ENCODE measurements at regions of chr3 and their contacts with region 1.

Region 1: DNA sequence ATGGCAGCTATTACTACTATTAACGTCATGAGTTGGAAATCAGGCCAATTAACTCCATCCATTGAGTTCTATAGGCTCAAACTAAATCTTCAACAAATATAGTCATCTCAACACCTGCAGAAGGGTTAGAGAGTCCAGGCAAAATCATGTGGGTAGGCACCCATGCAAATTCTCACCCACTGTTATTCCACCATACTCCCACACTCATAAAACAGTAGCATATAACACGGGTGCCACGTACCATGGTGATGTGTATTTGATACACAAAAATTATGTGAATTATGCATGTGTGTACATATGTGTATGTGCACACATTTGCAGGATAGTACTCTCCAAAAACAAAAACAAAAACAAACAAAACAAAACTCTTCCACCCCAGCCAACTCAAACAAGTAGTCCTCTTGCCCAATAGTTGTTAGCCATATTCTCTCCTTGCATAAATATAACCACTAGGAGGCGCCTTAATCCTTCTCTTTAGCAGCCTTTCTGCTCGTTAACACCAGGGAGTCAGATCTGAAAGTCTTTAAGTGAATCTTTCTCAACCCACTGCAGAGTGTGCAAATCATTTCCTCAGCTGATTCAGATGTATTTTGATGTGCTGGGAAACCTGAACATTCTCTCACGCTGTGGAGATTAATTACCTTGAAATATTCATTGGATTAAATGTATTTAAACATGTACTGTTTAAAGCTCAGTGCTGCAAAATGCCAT is 38.0 kb upstream of the COPB2 start:
- DNase-seq: peak; percentile 16
- ATAC-seq: peak; percentile 94
- H3K4me3 ChIP-seq: no peak overlapping the region
- H3K27ac ChIP-seq: no peak overlapping the region
- H3K4me1 ChIP-seq: no peaks in the 10 kb centered on the region
- H3K27me3 ChIP-seq: no peaks in the 10 kb centered on the region
- CTCF ChIP-seq: peak; percentile 67 to 79 (median 77)
- EP300 ChIP-seq: no peak
- POLR2A ChIP-seq: no peak
- RAD21 ChIP-seq: peak; percentile 90

Region 2: DNA sequence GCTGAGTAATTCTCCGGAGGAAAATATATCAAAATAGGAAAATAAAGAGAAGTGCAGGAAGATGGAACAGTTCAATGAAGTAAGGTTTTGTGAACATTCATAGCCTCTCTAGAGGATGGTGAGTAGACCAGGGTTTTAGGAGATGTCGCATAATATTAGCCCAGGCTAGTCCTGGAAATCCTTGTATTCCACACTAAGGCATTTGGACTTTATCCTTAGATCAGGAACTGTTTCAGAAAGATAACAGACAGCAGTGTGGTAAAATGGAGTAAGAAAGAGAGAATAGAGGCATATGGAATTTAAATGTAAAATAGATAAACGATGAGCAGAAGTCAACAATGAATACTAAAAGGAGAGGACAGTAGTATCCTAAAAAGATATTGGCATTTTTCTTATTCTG is 50.1 kb before region 1 on chr3:
- CTCF ChIA-PET with region 1: no interaction called
- POLR2A ChIA-PET with region 1: no interaction called
- RAD21 ChIA-PET with region 1: no interaction called
- SMC1A ChIA-PET with region 1: no interaction called
- in situ Hi-C with region 1: no loop called
- intact Hi-C with region 1: no loop called
- DNase-seq: no peak
- ATAC-seq: no peak
- H3K4me3 ChIP-seq: no peak overlapping the region
- H3K27ac ChIP-seq: no peak overlapping the region
- H3K4me1 ChIP-seq: no peaks in the 10 kb centered on the region; the same call in 1 of the 2 replicates
- H3K27me3 ChIP-seq: no peaks in the 10 kb centered on the region
- CTCF ChIP-seq: no peak
- EP300 ChIP-seq: no peak
- POLR2A ChIP-seq: no peak
- RAD21 ChIP-seq: no peak

Region 3: DNA sequence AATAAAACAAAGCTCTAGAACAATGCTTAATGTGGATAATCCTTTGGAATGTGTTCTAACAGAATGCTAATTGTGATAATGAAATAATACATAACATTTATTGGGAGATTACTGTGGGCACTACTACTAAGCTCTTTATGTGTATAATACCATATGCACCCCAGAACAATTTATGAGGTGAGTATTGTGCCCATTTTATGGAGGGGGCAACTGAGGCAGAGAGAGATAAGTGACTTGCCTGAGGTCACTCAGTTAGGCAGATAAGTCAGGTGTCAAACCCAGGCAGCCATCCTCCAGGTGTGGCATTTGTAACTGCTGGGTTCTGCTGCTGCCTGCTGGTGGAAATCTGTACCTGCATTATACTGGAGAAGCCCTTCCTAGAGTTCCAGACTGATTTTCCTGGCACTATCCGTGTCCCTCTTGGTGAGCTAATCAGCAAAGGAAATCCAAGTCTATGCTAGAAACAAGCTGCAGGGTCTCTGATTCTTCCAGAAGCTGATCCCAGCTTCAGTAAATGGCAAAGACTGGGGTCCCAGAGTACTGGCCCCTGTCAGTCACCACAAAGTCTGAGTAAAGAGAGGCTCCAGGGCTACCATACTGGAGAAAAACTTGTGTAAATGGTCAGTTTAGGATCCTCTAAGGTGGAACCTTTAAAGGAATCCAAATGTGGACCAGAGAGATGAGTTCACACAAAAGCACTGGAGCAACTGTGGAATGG is 134.7 kb after region 1 on chr3:
- CTCF ChIA-PET with region 1: interaction called, 14 read pairs
- POLR2A ChIA-PET with region 1: no interaction called
- RAD21 ChIA-PET with region 1: interaction called, 5 read pairs
- SMC1A ChIA-PET with region 1: interaction called, 5 read pairs
- in situ Hi-C with region 1: no loop called
- intact Hi-C with region 1: loop called (anchors 1 kb)
- DNase-seq: no peak
- ATAC-seq: peak; percentile 63
- H3K4me3 ChIP-seq: no peak overlapping the region
- H3K27ac ChIP-seq: no peak overlapping the region
- H3K4me1 ChIP-seq: no peaks in the 10 kb centered on the region
- H3K27me3 ChIP-seq: no peaks in the 10 kb centered on the region
- CTCF ChIP-seq: peak; percentile 47 to 51 (median 49); a peak in 4 of 6 replicates
- EP300 ChIP-seq: no peak
- POLR2A ChIP-seq: no peak
- RAD21 ChIP-seq: peak; percentile 77

Region 4: GRCh38 chr3:139629033-139629432 is 201.6 kb after region 1 on chr3:
- CTCF ChIA-PET with region 1: interaction called, 3 read pairs
- POLR2A ChIA-PET with region 1: no interaction called
- RAD21 ChIA-PET with region 1: no interaction called
- SMC1A ChIA-PET with region 1: interaction called, 6 read pairs
- in situ Hi-C with region 1: no loop called
- intact Hi-C with region 1: loop called (anchors 1 kb)
- DNase-seq: no peak
- ATAC-seq: peak; percentile 85
- H3K4me3 ChIP-seq: no peak overlapping the region
- H3K27ac ChIP-seq: no peak overlapping the region
- H3K4me1 ChIP-seq: peaks cover 5% of the 10 kb centered on the region
- H3K27me3 ChIP-seq: no peaks in the 10 kb centered on the region
- CTCF ChIP-seq: peak; percentile 23 to 46 (median 37); a peak in 5 of 6 replicates
- EP300 ChIP-seq: no peak
- POLR2A ChIP-seq: no peak
- RAD21 ChIP-seq: no peak

Region 5: GRCh38 chr3:139935016-139935865 is 507.8 kb after region 1 on chr3 and contains the start of gene CLSTN2:
- CTCF ChIA-PET with region 1: interaction called, 14 read pairs
- POLR2A ChIA-PET with region 1: no interaction called
- RAD21 ChIA-PET with region 1: no interaction called
- SMC1A ChIA-PET with region 1: no interaction called
- in situ Hi-C with region 1: no loop called
- intact Hi-C with region 1: no loop called
- DNase-seq: no peak
- ATAC-seq: peak; percentile 51
- H3K4me3 ChIP-seq: no peak within 1 kb of the TSS
- H3K27ac ChIP-seq: no peak within 1 kb of the TSS
- H3K4me1 ChIP-seq: no peaks in the 10 kb centered on the region
- H3K27me3 ChIP-seq: peaks cover 7% of the 10 kb centered on the region in 2 experiments; a peak in 3 of 4 replicates
- CTCF ChIP-seq: no peak
- EP300 ChIP-seq: no peak
- POLR2A ChIP-seq: no peak
- RAD21 ChIP-seq: no peak
- polyA plus RNA-seq, gene CLSTN2: under 0.01 to 0.10 TPM

Region 6: DNA sequence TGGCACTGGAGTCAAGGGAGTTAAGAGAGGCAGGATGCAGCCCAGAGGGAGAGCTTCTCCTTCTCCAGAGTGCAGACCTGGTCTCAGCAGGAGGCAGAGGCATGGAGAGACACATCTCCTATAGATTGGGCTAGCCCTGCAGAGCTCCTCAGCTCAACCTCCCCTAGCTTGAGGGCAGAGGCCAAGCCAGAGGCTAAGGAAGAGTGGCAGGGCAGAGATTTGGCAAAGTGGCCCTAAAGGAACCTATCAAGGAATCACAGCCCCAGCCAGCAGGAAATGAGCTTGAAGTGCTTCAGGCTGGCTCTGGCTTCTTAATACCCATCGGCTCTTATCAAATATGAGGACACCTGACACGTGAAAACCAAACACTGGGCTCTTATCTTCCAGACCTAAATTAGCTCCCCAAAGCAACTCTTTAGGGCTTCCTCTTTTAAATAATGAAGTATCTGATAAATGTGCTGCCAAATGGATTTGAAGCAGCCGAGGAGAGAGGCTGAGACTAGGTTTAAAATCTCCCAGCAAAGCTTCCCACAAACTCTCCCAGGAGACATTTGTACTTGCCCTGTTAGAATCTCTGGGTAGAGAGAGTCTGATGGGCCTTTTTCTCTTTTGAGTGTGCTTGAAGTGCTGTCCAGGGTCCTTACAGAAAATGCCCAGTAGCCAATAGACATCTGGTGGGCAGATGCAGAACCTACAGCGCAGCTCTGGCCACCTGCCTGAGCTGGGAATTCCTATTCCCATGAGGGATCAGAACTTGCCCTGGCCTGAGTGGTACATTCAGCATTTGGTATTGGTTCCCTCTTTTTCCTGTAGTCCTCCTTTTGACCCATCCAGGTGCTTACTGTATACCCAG is 779.0 kb after region 1 on chr3:
- CTCF ChIA-PET with region 1: no interaction called
- POLR2A ChIA-PET with region 1: no interaction called
- RAD21 ChIA-PET with region 1: no interaction called
- SMC1A ChIA-PET with region 1: no interaction called
- in situ Hi-C with region 1: no loop called
- intact Hi-C with region 1: loop called (anchors 5 kb)
- DNase-seq: no peak
- ATAC-seq: peak; percentile 65
- H3K4me3 ChIP-seq: no peak overlapping the region
- H3K27ac ChIP-seq: no peak overlapping the region
- H3K4me1 ChIP-seq: no peaks in the 10 kb centered on the region
- H3K27me3 ChIP-seq: no peaks in the 10 kb centered on the region; a peak in 2 of 4 replicates
- CTCF ChIP-seq: peak in 2 of 3 experiments; percentile 24 to 30; a peak in 2 of 6 replicates
- EP300 ChIP-seq: no peak
- POLR2A ChIP-seq: no peak
- RAD21 ChIP-seq: peak; percentile 35; the same call in 1 of the 2 replicates

Measured in GM12878 (cell line).